Endothelial cell of umbilical vein (primary cell): ENCODE measurements at regions of chr2 and their contacts with region 1.

Region 1: DNA sequence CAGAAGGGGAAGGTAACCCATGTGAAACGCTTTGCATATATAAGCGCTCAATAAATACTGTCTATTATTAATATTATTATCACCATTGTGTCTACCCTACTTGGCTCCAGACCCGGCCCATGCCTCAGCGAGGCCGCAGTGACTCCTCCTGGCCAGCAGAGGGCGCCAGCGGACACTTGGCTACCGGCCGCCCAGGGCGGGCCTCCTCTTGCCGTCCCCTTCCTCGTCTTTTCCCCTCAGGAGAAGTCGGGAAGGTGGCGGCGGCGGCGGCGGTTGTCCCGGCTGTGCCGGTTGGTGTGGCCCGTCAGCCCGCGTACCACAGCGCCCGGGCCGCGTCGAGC is at the start of gene AGFG1:
- DNase-seq: peak; percentile 85
- H3K4me3 ChIP-seq: peak within 1 kb of the TSS; percentile 76 to 100 (median 85)
- H3K27ac ChIP-seq: peak within 1 kb of the TSS; percentile 67
- H3K4me1 ChIP-seq: peaks cover 15% of the 10 kb centered on the region
- H3K27me3 ChIP-seq: no peaks in the 10 kb centered on the region
- CTCF ChIP-seq: peak; percentile 98 to 99
- POLR2A ChIP-seq: peak; percentile 55
- total RNA-seq, gene AGFG1: 69.2 and 87.9 TPM in 2 replicates

Region 2: GRCh38 chr2:227198866-227199265 is 273.0 kb before region 1 on chr2:
- CTCF ChIA-PET with region 1: no interaction called
- POLR2A ChIA-PET with region 1: no interaction called
- dilution Hi-C with region 1: no loop called
- intact Hi-C with region 1: no loop called
- DNase-seq: no peak
- H3K4me3 ChIP-seq: no peak overlapping the region
- H3K27ac ChIP-seq: no peak overlapping the region
- H3K4me1 ChIP-seq: no peaks in the 10 kb centered on the region
- H3K27me3 ChIP-seq: no peaks in the 10 kb centered on the region
- CTCF ChIP-seq: no peak
- POLR2A ChIP-seq: no peak

Region 3: GRCh38 chr2:227406177-227407031 is 65.5 kb before region 1 on chr2:
- CTCF ChIA-PET with region 1: interaction called, 35 read pairs
- POLR2A ChIA-PET with region 1: no interaction called
- dilution Hi-C with region 1: no loop called
- intact Hi-C with region 1: loop called (anchors 1 kb)
- DNase-seq: peak; percentile 96
- H3K4me3 ChIP-seq: no peak overlapping the region
- H3K27ac ChIP-seq: peak overlapping the region; percentile 85
- H3K4me1 ChIP-seq: peaks cover 8% of the 10 kb centered on the region
- H3K27me3 ChIP-seq: no peaks in the 10 kb centered on the region
- CTCF ChIP-seq: peak; percentile 57 to 81
- POLR2A ChIP-seq: peak; percentile 50

Region 4: GRCh38 chr2:227509824-227510619 is 38.1 kb after region 1 on chr2:
- CTCF ChIA-PET with region 1: no interaction called
- POLR2A ChIA-PET with region 1: no interaction called
- dilution Hi-C with region 1: no loop called
- intact Hi-C with region 1: loop called (anchors 2 kb)
- DNase-seq: peak; percentile 65
- H3K4me3 ChIP-seq: no peak overlapping the region
- H3K27ac ChIP-seq: no peak overlapping the region
- H3K4me1 ChIP-seq: peaks cover 15% of the 10 kb centered on the region
- H3K27me3 ChIP-seq: no peaks in the 10 kb centered on the region
- CTCF ChIP-seq: no peak
- POLR2A ChIP-seq: no peak

Region 5: GRCh38 chr2:227655454-227655853 is 183.6 kb after region 1 on chr2:
- CTCF ChIA-PET with region 1: no interaction called
- POLR2A ChIA-PET with region 1: no interaction called
- dilution Hi-C with region 1: no loop called
- intact Hi-C with region 1: loop called (anchors 2 kb)
- DNase-seq: peak; percentile 44
- H3K4me3 ChIP-seq: no peak overlapping the region
- H3K27ac ChIP-seq: no peak overlapping the region
- H3K4me1 ChIP-seq: no peaks in the 10 kb centered on the region
- H3K27me3 ChIP-seq: peaks cover 0 to 4% of the 10 kb centered on the region in 2 experiments
- CTCF ChIP-seq: no peak
- POLR2A ChIP-seq: no peak